ENCODE measurements at regions of chr1 and their contacts with region 1.

Region 1: GRCh38 chr1:227437495-227438008 is 119.3 kb upstream of the CDC42BPA start:
- DNase-seq: no peak
- H3K4me3 ChIP-seq: peak overlapping the region; percentile 12 to 21
- H3K27ac ChIP-seq: no peak overlapping the region
- H3K4me1 ChIP-seq: no peaks in the 10 kb centered on the region
- H3K27me3 ChIP-seq: no peaks in the 10 kb centered on the region
- CTCF ChIP-seq: peak in 3 of 4 experiments; percentile 25 to 61 (median 55)
- POLR2A ChIP-seq: no peak

Region 2: DNA sequence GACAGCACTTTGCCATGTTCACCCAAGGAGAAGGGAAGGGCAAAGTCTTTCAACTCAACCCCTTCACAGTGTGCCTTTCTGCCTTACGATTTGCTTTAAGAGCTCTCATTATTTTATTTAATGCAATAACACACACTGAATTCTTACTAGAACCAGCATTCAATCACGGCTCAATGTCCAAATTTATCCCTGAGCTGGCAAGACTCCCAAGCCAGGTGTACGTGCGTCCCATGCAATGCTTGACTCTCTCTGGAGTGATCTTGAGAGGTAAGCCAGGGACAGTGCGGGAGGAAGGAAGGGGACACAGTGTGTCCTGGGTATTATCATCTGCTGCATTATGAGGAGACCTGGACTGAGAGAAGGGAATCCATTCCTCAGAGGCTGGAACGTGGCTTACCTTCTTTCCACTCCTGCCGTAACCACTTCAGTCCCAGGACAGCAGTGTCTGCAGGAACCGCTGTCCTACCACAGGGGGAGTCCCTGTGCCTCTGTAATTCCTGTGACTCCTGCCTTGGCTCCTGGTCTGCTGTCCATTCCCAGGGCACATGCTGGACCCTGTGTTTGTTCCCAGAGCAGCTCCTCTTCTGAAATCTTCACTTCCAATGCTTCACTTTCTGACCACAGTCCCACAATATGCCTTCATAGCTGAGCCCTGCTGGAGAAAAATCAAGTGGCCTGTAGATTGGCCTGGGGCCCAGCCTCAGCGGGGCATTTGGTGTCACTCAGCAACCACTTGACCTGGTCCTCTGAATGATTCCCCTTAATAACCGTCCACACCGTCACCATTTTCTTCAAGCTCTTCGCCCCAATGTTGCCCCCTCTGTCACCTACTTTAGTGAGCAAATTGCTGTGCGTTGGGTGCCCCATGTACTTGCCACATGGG is 917.6 kb before region 1 on chr1:
- intact Hi-C with region 1: no loop called
- DNase-seq: no peak
- H3K4me3 ChIP-seq: no peak overlapping the region
- H3K27ac ChIP-seq: no peak overlapping the region
- H3K4me1 ChIP-seq: no peaks in the 10 kb centered on the region
- H3K27me3 ChIP-seq: no peaks in the 10 kb centered on the region
- CTCF ChIP-seq: no peak
- POLR2A ChIP-seq: no peak

Region 3: DNA sequence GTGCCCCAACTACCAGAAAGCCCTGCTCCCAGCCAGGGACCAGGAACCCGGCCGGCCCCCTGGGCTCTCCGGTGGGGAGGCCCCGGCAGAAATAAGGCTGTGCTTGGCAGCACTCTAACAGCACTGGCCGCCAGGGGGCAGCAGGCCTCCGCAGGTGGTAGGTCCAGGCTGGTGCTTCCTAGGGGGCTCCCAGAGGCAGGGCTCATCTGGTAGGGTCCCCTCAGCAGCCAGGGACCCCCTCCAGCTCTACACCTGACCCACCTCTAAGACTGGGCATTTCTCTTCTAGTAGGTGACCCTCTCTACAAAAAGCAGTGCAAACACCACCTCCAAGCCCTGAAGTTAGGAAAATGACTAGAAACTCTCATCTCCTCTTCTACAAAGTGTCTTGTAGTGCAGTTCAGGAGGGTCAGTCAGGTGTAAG is 803.4 kb before region 1 on chr1:
- intact Hi-C with region 1: loop called (anchors 5 kb)
- DNase-seq: peak; percentile 79
- H3K4me3 ChIP-seq: no peak overlapping the region
- H3K27ac ChIP-seq: peak overlapping the region; percentile 26 to 47
- H3K4me1 ChIP-seq: peaks cover 18% of the 10 kb centered on the region
- H3K27me3 ChIP-seq: no peaks in the 10 kb centered on the region
- CTCF ChIP-seq: peak; percentile 90 to 96 (median 94)
- POLR2A ChIP-seq: no peak

Region 4: GRCh38 chr1:226912587-226913176 is 524.9 kb before region 1 on chr1:
- intact Hi-C with region 1: loop called (anchors 5 kb)
- DNase-seq: peak; percentile 49
- H3K4me3 ChIP-seq: no peak overlapping the region
- H3K27ac ChIP-seq: no peak overlapping the region
- H3K4me1 ChIP-seq: no peaks in the 10 kb centered on the region
- H3K27me3 ChIP-seq: no peaks in the 10 kb centered on the region
- CTCF ChIP-seq: peak; percentile 11 to 69 (median 63)
- POLR2A ChIP-seq: no peak

Region 5: GRCh38 chr1:227131193-227131592 is 306.4 kb before region 1 on chr1:
- intact Hi-C with region 1: loop called (anchors 10 kb)
- DNase-seq: no peak
- H3K4me3 ChIP-seq: no peak overlapping the region
- H3K27ac ChIP-seq: no peak overlapping the region
- H3K4me1 ChIP-seq: no peaks in the 10 kb centered on the region
- H3K27me3 ChIP-seq: no peaks in the 10 kb centered on the region
- CTCF ChIP-seq: peak in 3 of 4 experiments; percentile 32 to 38 (median 35)
- POLR2A ChIP-seq: no peak

Region 6: DNA sequence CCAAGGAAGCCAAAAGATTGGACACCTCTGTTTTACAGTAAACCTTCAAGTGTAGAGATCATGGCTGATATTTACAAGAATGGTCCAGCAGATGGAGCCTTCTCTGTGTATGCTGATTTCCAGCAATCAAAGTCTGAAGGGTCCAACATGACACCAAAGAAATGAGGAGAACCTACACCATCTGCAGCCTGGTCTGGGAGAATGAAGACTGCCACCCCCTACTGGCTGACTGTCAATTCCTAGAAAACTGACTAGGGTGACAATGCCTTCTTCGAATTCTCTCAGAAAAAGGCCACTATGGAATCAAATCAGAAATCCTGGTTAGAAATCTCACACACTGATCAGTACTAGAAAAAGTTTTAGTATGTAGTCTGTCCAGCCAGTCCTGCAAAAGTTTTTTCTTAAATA is 202.6 kb before region 1 on chr1:
- intact Hi-C with region 1: loop called (anchors 5 kb)
- DNase-seq: peak; percentile 6
- H3K4me3 ChIP-seq: no peak overlapping the region
- H3K27ac ChIP-seq: no peak overlapping the region
- H3K4me1 ChIP-seq: peaks cover 2% of the 10 kb centered on the region
- H3K27me3 ChIP-seq: no peaks in the 10 kb centered on the region
- CTCF ChIP-seq: peak in 3 of 4 experiments; percentile 32 to 42 (median 39)
- POLR2A ChIP-seq: no peak

Measured in prostate gland (tissue), 2 donors.